Naive thymus-derived CD4-positive, alpha-beta T cell (primary cell): ENCODE measurements at regions of chr6 and their contacts with region 1.

Region 1: DNA sequence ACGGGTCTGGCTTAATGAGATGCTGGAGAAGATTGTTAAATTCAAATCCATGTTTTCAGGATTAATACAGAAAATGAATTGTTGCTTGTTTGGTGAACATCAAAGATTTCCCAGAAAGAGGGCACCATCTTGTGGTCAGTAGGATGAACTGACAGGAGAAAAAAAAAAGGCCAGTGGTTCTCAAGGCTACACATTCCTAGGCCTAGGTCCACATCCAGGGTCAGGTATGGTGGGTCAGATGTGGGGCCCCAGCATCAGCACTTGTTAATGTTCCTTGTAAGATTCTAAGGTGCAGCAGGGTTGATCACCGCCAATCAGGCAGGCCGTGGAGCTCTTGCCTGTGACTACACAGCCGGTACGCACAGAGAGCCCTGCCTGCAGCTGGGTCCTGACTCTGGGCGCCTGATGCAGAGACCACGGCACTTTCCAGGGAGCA is 34.0 kb upstream of the FOXO3 start:
- DNase-seq: peak in 3 of 9 donors; percentile 7 to 28 (median 17)
- ATAC-seq: peak; percentile 47
- H3K4me3 ChIP-seq: no peak overlapping the region
- H3K4me3 Mint-ChIP-seq: no peak overlapping the region
- H3K27ac ChIP-seq: no peak overlapping the region
- H3K27ac Mint-ChIP-seq: no peak overlapping the region
- H3K4me1 ChIP-seq: no peaks in the 10 kb centered on the region
- H3K4me1 Mint-ChIP-seq: no peaks in the 10 kb centered on the region
- H3K27me3 ChIP-seq: no peaks in the 10 kb centered on the region
- H3K27me3 Mint-ChIP-seq: peaks cover 0 to 9% (median 0%) of the 10 kb centered on the region in 5 donors

Region 2: DNA sequence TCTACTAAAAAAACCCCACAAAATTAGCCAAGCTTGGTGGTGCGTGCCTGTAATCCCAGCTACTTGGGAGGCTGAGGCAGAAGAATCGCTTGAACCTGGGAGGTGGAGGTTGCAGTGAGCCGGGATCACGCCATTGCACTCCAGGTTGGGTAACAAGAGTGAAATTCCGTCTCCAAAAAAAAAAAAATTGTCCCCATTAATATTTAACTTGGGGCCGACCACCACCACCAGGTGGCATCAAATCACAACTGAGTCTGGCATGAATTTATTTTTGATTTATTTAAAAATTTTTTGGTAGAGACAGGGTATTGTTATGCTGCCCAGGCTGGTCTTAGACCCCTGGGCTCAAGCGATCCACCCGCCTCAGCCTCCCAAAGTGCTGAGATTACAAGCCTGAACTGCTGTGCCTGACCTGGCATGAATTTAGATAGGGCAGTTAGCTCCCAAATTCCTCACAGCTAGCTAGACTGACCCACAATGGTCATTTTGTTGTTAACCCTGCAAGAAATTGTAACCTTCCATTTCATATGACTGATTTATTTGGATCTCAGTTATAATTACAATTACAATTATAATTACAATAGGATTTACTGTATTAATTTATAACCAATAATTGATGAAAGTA is 1394.3 kb before region 1 on chr6:
- CTCF ChIA-PET with region 1: no interaction called
- POLR2A ChIA-PET with region 1: no interaction called
- intact Hi-C with region 1: loop called in 1 of 2 experiments (anchors 10 kb)
- DNase-seq: peak in 5 of 9 donors; percentile 4 to 28 (median 10)
- ATAC-seq: no peak
- H3K4me3 ChIP-seq: no peak overlapping the region
- H3K4me3 Mint-ChIP-seq: no peak overlapping the region
- H3K27ac ChIP-seq: no peak overlapping the region
- H3K27ac Mint-ChIP-seq: no peak overlapping the region
- H3K4me1 ChIP-seq: no peaks in the 10 kb centered on the region
- H3K4me1 Mint-ChIP-seq: no peaks in the 10 kb centered on the region
- H3K27me3 ChIP-seq: no peaks in the 10 kb centered on the region
- H3K27me3 Mint-ChIP-seq: peaks cover 0 to 6% (median 0%) of the 10 kb centered on the region in 5 donors

Region 3: GRCh38 chr6:107345393-107345792 is 1181.4 kb before region 1 on chr6:
- CTCF ChIA-PET with region 1: no interaction called
- POLR2A ChIA-PET with region 1: no interaction called
- intact Hi-C with region 1: no loop called
- DNase-seq: no peak
- ATAC-seq: no peak
- H3K4me3 ChIP-seq: no peak overlapping the region
- H3K4me3 Mint-ChIP-seq: no peak overlapping the region
- H3K27ac ChIP-seq: no peak overlapping the region
- H3K27ac Mint-ChIP-seq: no peak overlapping the region
- H3K4me1 ChIP-seq: no peaks in the 10 kb centered on the region
- H3K4me1 Mint-ChIP-seq: peaks cover 0 to 4% (median 0%) of the 10 kb centered on the region in 7 donors
- H3K27me3 ChIP-seq: no peaks in the 10 kb centered on the region
- H3K27me3 Mint-ChIP-seq: no peaks in the 10 kb centered on the region

Region 4: DNA sequence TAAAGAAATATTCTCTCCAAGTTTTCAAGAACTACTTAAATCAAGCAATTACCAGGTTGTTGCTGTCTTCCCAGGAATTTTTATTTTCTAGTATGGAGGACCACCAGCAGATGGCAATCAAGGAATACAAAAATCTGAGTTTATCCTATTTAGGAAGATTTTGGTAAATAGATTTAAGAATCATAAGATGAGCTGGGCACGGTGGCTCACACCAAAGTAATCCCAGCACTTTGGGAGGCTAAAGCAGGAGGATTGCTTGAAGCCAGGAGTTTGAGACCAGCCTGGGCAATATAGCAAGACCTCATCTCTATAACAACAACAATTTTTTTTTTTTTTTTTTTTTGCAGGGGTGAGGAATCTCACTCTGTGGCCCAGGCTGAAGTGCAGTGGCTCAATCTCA is 549.5 kb before region 1 on chr6:
- CTCF ChIA-PET with region 1: interaction called, 6 read pairs
- POLR2A ChIA-PET with region 1: no interaction called
- intact Hi-C with region 1: loop called (anchors 1 to 10 kb)
- DNase-seq: no peak
- ATAC-seq: no peak
- H3K4me3 ChIP-seq: no peak overlapping the region
- H3K4me3 Mint-ChIP-seq: no peak overlapping the region
- H3K27ac ChIP-seq: no peak overlapping the region
- H3K27ac Mint-ChIP-seq: no peak overlapping the region
- H3K4me1 ChIP-seq: no peaks in the 10 kb centered on the region
- H3K4me1 Mint-ChIP-seq: peaks cover 0 to 12% (median 0%) of the 10 kb centered on the region in 7 donors
- H3K27me3 ChIP-seq: no peaks in the 10 kb centered on the region
- H3K27me3 Mint-ChIP-seq: peaks cover 0 to 15% (median 0%) of the 10 kb centered on the region in 5 donors

Region 5: DNA sequence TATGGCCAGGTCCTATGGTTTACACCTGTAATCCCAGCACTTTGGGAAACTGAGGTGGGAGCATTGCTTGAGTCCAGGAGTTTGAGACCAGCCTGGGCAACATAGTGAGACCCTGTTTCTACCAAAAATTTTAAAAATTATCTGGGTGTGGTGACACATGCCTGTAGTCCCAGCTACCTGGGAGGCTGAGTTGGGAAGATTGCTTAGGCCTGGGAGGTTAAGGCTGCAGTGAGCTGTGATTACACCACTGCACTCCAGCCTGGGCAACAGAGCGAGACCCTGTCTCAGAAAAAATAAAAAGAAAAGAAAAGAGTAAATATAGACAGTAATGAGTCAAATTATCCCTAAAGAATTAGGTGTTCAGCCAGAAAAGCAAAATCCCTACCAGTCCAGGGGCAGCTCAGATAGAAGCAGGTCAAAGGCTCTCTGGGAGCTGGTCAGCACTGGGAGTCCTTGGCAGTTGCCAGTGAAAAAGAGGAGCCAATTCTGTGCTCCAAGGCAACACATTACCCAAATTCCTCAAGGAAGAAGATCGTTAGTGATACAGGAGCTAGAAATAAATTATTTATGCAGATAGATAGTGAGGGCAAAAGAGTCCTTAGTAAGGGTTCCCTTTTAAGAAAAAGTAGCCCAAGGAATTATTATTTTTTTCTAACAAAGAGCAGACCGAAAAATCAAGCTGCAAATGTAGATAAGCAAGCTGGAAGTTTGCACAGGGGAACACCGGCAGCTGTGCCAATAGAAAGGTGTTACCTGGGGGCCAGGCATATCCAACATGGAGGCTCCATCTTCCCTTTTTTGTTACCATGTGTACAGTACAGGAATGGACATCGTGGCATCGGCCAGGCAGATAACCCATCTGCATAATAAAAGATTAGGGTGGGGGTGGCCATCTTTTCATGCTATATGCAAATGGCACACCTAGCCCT is 537.3 kb before region 1 on chr6:
- CTCF ChIA-PET with region 1: no interaction called
- POLR2A ChIA-PET with region 1: no interaction called
- intact Hi-C with region 1: loop called in 1 of 2 experiments (anchors 10 kb)
- DNase-seq: no peak
- ATAC-seq: no peak
- H3K4me3 ChIP-seq: no peak overlapping the region
- H3K4me3 Mint-ChIP-seq: no peak overlapping the region
- H3K27ac ChIP-seq: no peak overlapping the region
- H3K27ac Mint-ChIP-seq: no peak overlapping the region
- H3K4me1 ChIP-seq: no peaks in the 10 kb centered on the region
- H3K4me1 Mint-ChIP-seq: peaks cover 0 to 11% (median 4%) of the 10 kb centered on the region in 7 donors
- H3K27me3 ChIP-seq: no peaks in the 10 kb centered on the region
- H3K27me3 Mint-ChIP-seq: peaks cover 0 to 2% (median 0%) of the 10 kb centered on the region in 5 donors

Region 6: GRCh38 chr6:108250240-108250866 is 276.4 kb before region 1 on chr6:
- CTCF ChIA-PET with region 1: no interaction called
- POLR2A ChIA-PET with region 1: no interaction called
- intact Hi-C with region 1: loop called in 1 of 2 experiments (anchors 1 kb)
- DNase-seq: no peak
- ATAC-seq: no peak
- H3K4me3 ChIP-seq: no peak overlapping the region
- H3K4me3 Mint-ChIP-seq: peak overlapping the region in 4 of 10 donors; percentile 17 to 51 (median 30)
- H3K27ac ChIP-seq: no peak overlapping the region
- H3K27ac Mint-ChIP-seq: peak overlapping the region in 2 of 9 donors; percentile 31 to 65
- H3K4me1 ChIP-seq: peaks cover 0 to 4% of the 10 kb centered on the region in 2 donors
- H3K4me1 Mint-ChIP-seq: peaks cover 36 to 75% (median 68%) of the 10 kb centered on the region in 7 donors
- H3K27me3 ChIP-seq: no peaks in the 10 kb centered on the region
- H3K27me3 Mint-ChIP-seq: no peaks in the 10 kb centered on the region

Region 7: GRCh38 chr6:108707328-108707960 is 180.7 kb after region 1 on chr6:
- CTCF ChIA-PET with region 1: no interaction called
- POLR2A ChIA-PET with region 1: no interaction called
- intact Hi-C with region 1: no loop called
- DNase-seq: no peak
- ATAC-seq: no peak
- H3K4me3 ChIP-seq: no peak overlapping the region
- H3K4me3 Mint-ChIP-seq: no peak overlapping the region
- H3K27ac ChIP-seq: no peak overlapping the region
- H3K27ac Mint-ChIP-seq: no peak overlapping the region
- H3K4me1 ChIP-seq: no peaks in the 10 kb centered on the region
- H3K4me1 Mint-ChIP-seq: peaks cover 0 to 2% (median 0%) of the 10 kb centered on the region in 7 donors
- H3K27me3 ChIP-seq: no peaks in the 10 kb centered on the region
- H3K27me3 Mint-ChIP-seq: no peaks in the 10 kb centered on the region